ENCODE measurements at regions of chr11 and their contacts with region 1.

Region 1: DNA sequence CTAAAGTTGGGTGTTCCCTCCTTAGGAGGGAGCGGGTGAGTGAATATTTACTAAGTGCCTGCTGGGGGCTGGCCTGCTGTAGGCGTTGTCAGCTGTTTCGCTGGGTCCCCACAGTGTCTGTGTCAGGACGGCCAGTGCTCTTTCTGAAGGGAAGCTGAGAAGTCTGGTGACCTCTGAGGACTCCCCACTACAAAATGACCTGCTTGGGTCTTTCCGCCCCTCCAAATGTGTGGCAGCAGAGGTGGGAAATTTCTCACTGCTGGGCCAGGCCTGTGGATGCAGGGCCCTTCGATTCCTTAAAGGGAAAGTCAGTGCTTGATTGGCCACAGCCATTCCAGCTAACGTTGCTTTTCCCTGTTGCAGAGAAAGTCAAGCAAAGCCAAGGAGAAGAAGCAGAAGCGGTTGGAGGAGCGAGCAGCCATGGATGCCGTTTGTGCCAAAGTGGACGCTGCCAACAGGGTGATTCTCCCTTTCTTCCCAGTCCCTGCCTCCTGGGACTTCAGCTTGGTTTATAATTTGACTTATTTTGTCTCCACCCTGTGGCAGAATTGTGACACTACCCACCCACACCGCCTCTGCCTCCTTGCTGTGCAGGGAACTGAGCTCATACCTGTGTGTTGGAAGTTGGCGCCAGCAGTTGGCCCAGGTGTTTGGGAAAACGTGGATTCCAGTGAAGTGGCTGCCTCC is 6.8 kb downstream of the NAA40 start:
- DNase-seq: peak; percentile 77 to 86 (median 85)
- ATAC-seq: peak; percentile 87 to 88
- H3K4me3 ChIP-seq: no peak overlapping the region
- H3K27ac ChIP-seq: peak overlapping the region; percentile 59
- H3K4me1 ChIP-seq: no peaks in the 10 kb centered on the region
- H3K27me3 ChIP-seq: no peaks in the 10 kb centered on the region

Region 2: GRCh38 chr11:63768237-63769043 is 177.2 kb before region 1 on chr11 and contains the start of gene ZFTA:
- intact Hi-C with region 1: loop called in 2 of 4 experiments (anchors 5 to 10 kb)
- DNase-seq: peak; percentile 75 to 88 (median 86)
- ATAC-seq: peak; percentile 17 to 32
- H3K4me3 ChIP-seq: peak within 1 kb of the TSS; percentile 99
- H3K27ac ChIP-seq: peak within 1 kb of the TSS; percentile 79
- H3K4me1 ChIP-seq: peaks cover 4% of the 10 kb centered on the region
- H3K27me3 ChIP-seq: no peaks in the 10 kb centered on the region
- total RNA-seq, gene ZFTA: 13.9 to 17.7 (median 15.4) TPM

Region 3: DNA sequence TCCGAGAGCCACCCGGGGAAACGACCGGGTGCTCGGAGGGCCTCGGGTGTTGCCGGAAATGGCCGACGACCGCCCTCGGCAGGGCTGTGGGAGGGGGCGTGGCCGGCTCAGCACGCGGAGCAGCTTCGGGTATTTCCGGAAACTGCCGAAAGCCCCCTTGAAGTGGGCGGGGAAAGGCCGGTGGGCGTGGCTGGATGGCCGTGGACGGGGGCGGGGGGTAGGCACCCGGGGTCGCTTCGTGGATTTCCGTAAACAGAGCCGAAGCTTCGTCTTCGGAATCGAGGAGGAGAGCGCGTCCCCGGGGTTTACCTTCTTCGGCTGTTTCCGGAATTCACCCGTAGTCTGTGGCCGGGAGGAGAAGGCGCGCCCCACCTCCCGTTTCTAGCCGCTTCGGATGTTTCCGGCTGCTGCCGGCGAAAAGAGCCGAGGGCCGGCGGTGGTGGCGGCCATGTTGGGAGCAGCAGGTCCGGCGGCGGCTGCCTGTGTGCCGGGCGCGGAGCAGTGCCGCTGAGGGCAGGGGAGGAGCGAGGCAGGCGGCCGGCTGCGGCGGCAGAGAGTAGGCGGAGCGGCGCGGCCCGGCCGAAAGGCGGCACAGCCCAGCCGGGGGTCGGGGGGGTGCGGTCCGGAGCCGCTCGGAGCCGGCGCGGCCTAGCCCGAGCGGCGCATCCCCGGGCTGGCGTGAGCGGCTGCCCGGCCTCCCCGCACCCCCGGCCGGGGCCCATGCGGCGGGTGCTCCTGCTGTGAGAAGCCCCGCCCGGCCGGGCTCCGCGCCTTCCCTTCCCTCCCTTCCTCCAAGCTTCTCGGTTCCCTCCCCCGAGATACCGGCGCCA is 106.7 kb before region 1 on chr11 and contains the start of gene MARK2:
- intact Hi-C with region 1: loop called (anchors 1 to 2 kb)
- DNase-seq: peak; percentile 97 to 99 (median 99)
- ATAC-seq: peak; percentile 91 to 94
- H3K4me3 ChIP-seq: peak within 1 kb of the TSS; percentile 98
- H3K27ac ChIP-seq: peak within 1 kb of the TSS; percentile 87
- H3K4me1 ChIP-seq: peaks cover 16% of the 10 kb centered on the region
- H3K27me3 ChIP-seq: no peaks in the 10 kb centered on the region
- total RNA-seq, gene MARK2: 31.3 to 45.3 (median 41.1) TPM

Measured in right cardiac atrium (tissue), 5 donors.